GM10248 (cell line): ENCODE measurements at regions of chr15 and their contacts with region 1.

Region 1: GRCh38 chr15:43824302-43825246 is at the start of gene MFAP1:
- DNase-seq: peak; percentile 93
- CTCF ChIP-seq: no peak

Region 2: GRCh38 chr15:43808960-43809678 is 15.5 kb before region 1 on chr15:
- CTCF ChIA-PET with region 1: interaction called, 42 read pairs
- POLR2A ChIA-PET with region 1: interaction called, 5 read pairs
- DNase-seq: peak; percentile 60
- CTCF ChIP-seq: no peak